Activated B cell treated with CpG ODN at 0.5 μM for 24 hours (primary cell): ENCODE measurements at regions of chr10 and their contacts with region 1.

Region 1: GRCh38 chr10:95741807-95742467 is 14.0 kb upstream of the ENTPD1 start:
- DNase-seq: no peak
- ATAC-seq: peak; percentile 83
- H3K4me3 Mint-ChIP-seq: peak overlapping the region; percentile 85
- H3K27ac Mint-ChIP-seq: peak overlapping the region; percentile 99
- H3K4me1 Mint-ChIP-seq: peaks cover 55% of the 10 kb centered on the region
- H3K27me3 Mint-ChIP-seq: no peaks in the 10 kb centered on the region
- CTCF ChIP-seq: no peak

Region 2: GRCh38 chr10:95716466-95717224 is 25.3 kb before region 1 on chr10:
- CTCF ChIA-PET with region 1: interaction called, 3 read pairs
- POLR2A ChIA-PET with region 1: interaction called, 12 read pairs
- intact Hi-C with region 1: no loop called
- DNase-seq: no peak
- ATAC-seq: no peak
- H3K4me3 Mint-ChIP-seq: no peak overlapping the region
- H3K27ac Mint-ChIP-seq: no peak overlapping the region
- H3K4me1 Mint-ChIP-seq: peaks cover 5% of the 10 kb centered on the region
- H3K27me3 Mint-ChIP-seq: no peaks in the 10 kb centered on the region
- CTCF ChIP-seq: no peak

Region 3: DNA sequence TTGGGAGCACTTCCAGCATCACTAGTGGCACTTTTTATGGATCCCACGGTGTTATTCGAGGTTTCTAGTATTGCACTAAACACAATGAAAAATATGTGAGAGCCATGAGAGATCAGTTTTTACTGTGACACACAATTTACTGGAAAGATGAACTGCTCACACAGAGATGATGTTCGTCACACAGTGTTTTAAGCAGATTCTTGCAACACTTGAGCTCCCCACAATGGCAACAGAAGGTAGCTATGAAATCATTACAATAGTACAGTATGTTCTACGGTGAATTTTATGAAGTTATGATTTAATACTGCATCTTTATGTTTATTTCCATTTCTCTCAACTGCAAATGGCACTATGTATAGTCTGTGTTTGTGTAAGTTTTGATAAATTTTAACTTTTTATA is 13.4 kb before region 1 on chr10:
- CTCF ChIA-PET with region 1: no interaction called
- POLR2A ChIA-PET with region 1: interaction called, 7 read pairs
- intact Hi-C with region 1: loop called (anchors 1 kb)
- DNase-seq: no peak
- ATAC-seq: no peak
- H3K4me3 Mint-ChIP-seq: no peak overlapping the region
- H3K27ac Mint-ChIP-seq: no peak overlapping the region
- H3K4me1 Mint-ChIP-seq: peaks cover 34% of the 10 kb centered on the region
- H3K27me3 Mint-ChIP-seq: no peaks in the 10 kb centered on the region
- CTCF ChIP-seq: no peak

Region 4: GRCh38 chr10:96784253-96784652 is 1042.3 kb after region 1 on chr10:
- CTCF ChIA-PET with region 1: no interaction called
- POLR2A ChIA-PET with region 1: no interaction called
- intact Hi-C with region 1: no loop called
- DNase-seq: no peak
- ATAC-seq: no peak
- H3K4me3 Mint-ChIP-seq: no peak overlapping the region
- H3K27ac Mint-ChIP-seq: no peak overlapping the region
- H3K4me1 Mint-ChIP-seq: peaks cover 15% of the 10 kb centered on the region
- H3K27me3 Mint-ChIP-seq: no peaks in the 10 kb centered on the region
- CTCF ChIP-seq: no peak